ENCODE measurements at regions of chr16 and their contacts with region 1.

Region 1: DNA sequence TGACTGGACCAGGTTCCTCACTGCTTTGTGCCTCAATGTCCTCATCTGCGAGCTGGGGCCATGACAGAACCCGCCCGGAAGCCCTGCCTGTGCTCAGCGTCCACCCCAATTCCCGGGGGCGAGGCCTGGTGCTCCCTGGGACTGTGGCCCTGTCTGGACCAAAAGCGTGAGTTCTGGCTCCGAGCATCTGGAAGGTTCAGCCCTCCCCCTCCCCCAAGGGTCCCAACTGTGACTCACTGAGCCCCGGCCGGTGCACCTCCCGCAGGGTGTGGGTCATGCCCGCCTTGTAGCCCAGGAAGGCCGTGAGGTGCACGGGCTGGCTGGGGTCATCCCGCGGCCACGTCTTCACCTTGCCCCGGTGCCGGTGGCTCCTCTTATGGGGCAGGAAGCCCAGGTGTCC is 770 bp downstream of the RPL3L start:
- DNase-seq: no peak
- H3K4me3 ChIP-seq: no peak overlapping the region
- H3K27ac ChIP-seq: no peak overlapping the region
- H3K4me1 ChIP-seq: peaks cover under 1% of the 10 kb centered on the region; the same call in 1 of the 2 replicates
- H3K27me3 ChIP-seq: no peaks in the 10 kb centered on the region
- CTCF ChIP-seq: no peak

Region 2: GRCh38 chr16:2728034-2728433 is 774.3 kb after region 1 on chr16:
- CTCF ChIA-PET with region 1: no interaction called
- POLR2A ChIA-PET with region 1: interaction called, 11 read pairs
- intact Hi-C with region 1: no loop called
- DNase-seq: no peak
- H3K4me3 ChIP-seq: no peak overlapping the region
- H3K27ac ChIP-seq: no peak overlapping the region
- H3K4me1 ChIP-seq: peaks cover 7% of the 10 kb centered on the region
- H3K27me3 ChIP-seq: no peaks in the 10 kb centered on the region
- CTCF ChIP-seq: no peak

Measured in PC-9 (cell line).